ENCODE measurements at regions of chr18 and their contacts with region 1.

Region 1: DNA sequence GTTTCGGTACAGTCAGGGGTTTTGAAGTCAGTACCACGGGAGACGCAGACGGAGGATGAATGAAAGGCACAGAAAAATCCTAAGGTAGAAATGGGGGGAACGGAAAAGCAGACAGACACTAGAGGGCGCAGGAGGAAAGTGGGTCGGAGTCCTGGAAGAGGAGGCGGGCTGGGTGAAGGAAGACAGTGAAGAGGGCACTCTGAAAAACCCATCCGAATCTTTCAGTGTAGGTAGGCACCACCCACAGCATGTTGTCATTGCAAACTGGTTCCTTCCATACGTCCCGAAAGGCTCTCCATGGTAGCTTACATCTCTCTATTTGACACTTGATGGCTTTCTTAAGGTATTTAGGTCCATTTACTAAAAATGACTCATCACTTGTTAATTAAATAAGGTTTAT is 18.5 kb upstream of the ZNF236 start:
- DNase-seq: no peak
- H3K4me3 ChIP-seq: no peak overlapping the region
- H3K27ac ChIP-seq: no peak overlapping the region
- H3K4me1 ChIP-seq: peaks cover 0 to 4% of the 10 kb centered on the region in 2 donors
- H3K27me3 ChIP-seq: no peaks in the 10 kb centered on the region
- CTCF ChIP-seq: peak; percentile 51 to 79 (median 69)

Region 2: GRCh38 chr18:76518123-76518859 is 285.5 kb before region 1 on chr18:
- intact Hi-C with region 1: no loop called
- DNase-seq: no peak
- H3K4me3 ChIP-seq: peak overlapping the region; percentile 36 to 41
- H3K27ac ChIP-seq: no peak overlapping the region
- H3K4me1 ChIP-seq: no peaks in the 10 kb centered on the region
- H3K27me3 ChIP-seq: no peaks in the 10 kb centered on the region
- CTCF ChIP-seq: no peak

Region 3: DNA sequence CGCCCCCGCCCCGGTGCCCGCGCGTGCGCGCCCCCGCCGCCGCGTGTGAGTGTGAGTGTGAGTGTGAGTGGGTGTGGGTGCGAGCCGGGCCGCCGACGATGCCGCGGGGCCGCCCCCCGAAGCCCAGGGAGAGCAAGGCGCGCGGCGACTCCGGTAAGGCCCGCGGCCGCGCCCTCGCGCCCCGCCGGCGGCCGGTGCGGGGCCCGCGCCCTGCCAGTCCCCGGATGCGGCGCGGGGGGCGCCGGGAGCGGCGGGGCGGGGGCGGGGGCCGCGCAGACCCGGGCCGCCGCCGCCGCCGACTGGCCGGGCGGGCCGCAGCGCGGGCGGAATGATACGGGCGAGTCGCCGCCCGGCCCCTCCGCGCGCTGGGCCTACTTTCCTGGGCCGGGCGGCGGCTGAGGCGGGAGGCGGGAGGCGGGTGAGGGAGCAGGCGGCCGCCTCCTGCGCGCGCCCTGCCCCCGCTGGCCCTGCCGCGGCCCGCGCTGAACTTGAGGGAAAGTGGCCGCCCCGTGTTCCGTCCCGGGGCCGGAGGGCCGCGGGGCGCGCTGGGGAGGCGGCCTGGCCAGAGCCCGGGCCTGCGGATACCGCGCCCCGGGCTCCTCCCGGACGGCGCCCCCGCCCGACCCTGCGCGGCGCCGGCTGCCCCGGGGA is 18.8 kb after region 1 on chr18 and contains the start of gene ZNF236:
- intact Hi-C with region 1: loop called (anchors 2 kb)
- DNase-seq: peak in 1 of 2 donors; percentile 84
- H3K4me3 ChIP-seq: peak within 1 kb of the TSS; percentile 78 to 93
- H3K27ac ChIP-seq: peak within 1 kb of the TSS; percentile 92 to 96
- H3K4me1 ChIP-seq: peaks cover 0 to 9% of the 10 kb centered on the region in 2 donors
- H3K27me3 ChIP-seq: no peaks in the 10 kb centered on the region
- CTCF ChIP-seq: no peak
- total RNA-seq, gene ZNF236: 9.7 TPM

Region 4: DNA sequence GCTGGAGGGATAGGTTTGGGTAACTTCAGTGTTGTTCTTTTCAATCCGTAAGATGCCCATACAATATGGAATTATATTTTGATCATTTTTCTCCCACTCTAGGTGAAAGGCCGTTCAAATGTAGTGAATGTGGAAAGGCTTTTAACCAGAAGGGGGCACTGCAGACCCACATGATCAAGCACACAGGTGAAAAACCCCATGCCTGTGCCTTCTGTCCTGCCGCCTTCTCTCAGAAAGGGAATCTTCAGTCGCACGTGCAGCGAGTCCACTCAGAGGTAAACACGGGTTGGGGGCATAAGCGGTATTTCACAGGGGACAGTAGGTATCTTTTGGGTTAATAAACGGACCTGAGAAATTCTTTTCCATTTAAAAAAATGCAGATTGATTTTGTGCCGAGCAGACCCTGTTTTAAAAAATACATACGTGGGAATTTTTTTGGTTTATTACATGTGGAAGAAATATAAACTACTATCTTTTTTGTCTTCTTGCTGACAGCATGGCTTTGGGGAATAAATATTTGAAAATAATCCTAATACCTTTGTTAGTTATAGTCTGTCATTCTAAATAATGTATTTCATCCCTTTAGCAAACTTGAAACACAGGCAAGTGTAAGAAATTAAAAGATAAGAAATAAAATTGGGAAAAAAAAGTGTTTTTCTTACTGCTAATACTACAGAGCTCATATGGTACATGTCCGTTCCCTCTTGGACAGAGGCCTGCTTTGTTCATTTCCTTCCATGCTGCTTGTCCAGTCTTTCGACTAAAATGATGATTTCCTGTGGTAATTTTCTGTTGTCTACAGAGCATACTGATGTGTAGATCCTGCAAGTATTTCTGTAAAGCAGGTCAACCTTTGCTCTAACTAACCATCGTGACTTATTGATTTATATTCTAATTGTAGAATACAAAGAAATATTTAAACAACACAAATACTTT is 71.8 kb after region 1 on chr18:
- intact Hi-C with region 1: loop called (anchors 5 kb)
- DNase-seq: no peak
- H3K4me3 ChIP-seq: no peak overlapping the region
- H3K27ac ChIP-seq: no peak overlapping the region
- H3K4me1 ChIP-seq: no peaks in the 10 kb centered on the region
- H3K27me3 ChIP-seq: no peaks in the 10 kb centered on the region
- CTCF ChIP-seq: peak in 1 of 3 experiments; percentile 55

Region 5: GRCh38 chr18:76903386-76903785 is 99.6 kb after region 1 on chr18:
- intact Hi-C with region 1: no loop called
- DNase-seq: no peak
- H3K4me3 ChIP-seq: no peak overlapping the region
- H3K27ac ChIP-seq: no peak overlapping the region
- H3K4me1 ChIP-seq: no peaks in the 10 kb centered on the region
- H3K27me3 ChIP-seq: no peaks in the 10 kb centered on the region
- CTCF ChIP-seq: no peak

Region 6: DNA sequence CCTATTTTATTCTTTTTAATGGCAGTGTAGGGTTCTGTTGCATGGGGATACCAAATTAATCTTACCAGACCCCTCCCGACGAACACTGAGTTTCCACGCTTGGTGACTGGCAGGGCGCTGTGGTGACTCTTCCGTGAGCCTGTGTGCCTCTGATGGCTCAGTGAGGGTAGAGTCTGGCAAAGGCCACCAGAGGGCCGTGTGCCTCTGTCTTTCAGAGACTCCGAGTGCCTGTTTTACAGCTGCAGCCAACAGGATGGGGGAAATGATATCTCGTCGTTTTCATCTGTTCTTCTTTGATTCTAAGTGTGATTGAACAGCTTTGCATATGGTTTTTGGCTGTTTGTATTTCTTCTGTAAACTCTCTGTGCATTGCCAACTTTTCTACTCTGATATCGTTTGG is 118.3 kb after region 1 on chr18:
- intact Hi-C with region 1: loop called (anchors 10 kb)
- DNase-seq: no peak
- H3K4me3 ChIP-seq: no peak overlapping the region
- H3K27ac ChIP-seq: no peak overlapping the region
- H3K4me1 ChIP-seq: no peaks in the 10 kb centered on the region
- H3K27me3 ChIP-seq: no peaks in the 10 kb centered on the region
- CTCF ChIP-seq: peak in 2 of 3 experiments; percentile 23 to 25

Region 7: GRCh38 chr18:76982841-76983587 is 179.2 kb after region 1 on chr18:
- intact Hi-C with region 1: loop called (anchors 1 kb)
- DNase-seq: peak in 1 of 2 donors; percentile 84
- H3K4me3 ChIP-seq: no peak overlapping the region
- H3K27ac ChIP-seq: no peak overlapping the region
- H3K4me1 ChIP-seq: no peaks in the 10 kb centered on the region
- H3K27me3 ChIP-seq: no peaks in the 10 kb centered on the region
- CTCF ChIP-seq: peak; percentile 58 to 90 (median 87)